ENCODE measurements at regions of chr6 and their contacts with region 1.

Region 1: DNA sequence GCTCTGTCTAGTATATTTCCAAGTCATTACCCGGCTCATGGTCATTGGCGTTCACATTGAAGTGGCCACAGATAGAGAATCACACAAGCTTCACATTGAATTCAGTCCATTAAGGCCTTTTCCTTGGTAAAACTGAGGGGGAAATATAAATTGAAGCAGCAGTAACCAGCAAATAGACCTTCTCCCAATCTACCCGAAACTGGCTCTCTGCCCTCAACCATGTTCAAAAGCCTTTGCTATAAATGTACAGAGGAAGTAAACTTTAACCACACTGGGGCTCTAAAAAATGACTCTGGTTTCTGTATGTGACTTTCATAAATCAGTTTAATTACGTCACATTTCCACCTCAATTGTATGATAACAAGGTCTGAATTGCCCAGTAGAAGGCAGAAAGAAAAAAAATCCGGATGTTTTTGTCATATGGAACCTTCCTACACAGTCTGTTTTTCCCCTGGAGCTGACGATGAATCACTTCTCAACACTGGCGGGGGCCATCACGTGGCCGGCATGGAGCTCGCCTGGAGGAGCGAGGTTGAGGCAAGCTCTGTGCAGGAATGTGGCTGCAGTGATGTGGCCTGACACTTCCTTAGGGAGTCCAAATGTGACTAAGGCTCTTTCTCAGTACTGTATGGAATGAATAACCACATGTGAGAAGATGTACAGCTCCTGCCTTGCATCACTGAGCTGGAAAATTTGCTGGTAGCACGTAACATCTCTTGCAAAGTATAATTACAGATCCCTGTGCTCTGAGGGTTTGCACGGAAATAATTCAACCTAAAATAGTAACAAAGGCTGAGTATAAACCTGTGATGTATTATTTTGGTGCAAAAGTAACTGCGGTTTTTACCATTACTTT is 58.6 kb upstream of the SNX9 start:
- DNase-seq: peak; percentile 95
- H3K4me3 Mint-ChIP-seq: peak overlapping the region; percentile 57
- H3K27ac Mint-ChIP-seq: peak overlapping the region; percentile 96
- H3K4me1 Mint-ChIP-seq: peaks cover 70% of the 10 kb centered on the region
- H3K27me3 Mint-ChIP-seq: peaks cover 6% of the 10 kb centered on the region

Region 2: GRCh38 chr6:157535339-157536222 is 228.8 kb before region 1 on chr6:
- intact Hi-C with region 1: loop called (anchors 5 kb)
- DNase-seq: peak; percentile 76
- H3K4me3 Mint-ChIP-seq: peak overlapping the region; percentile 67
- H3K27ac Mint-ChIP-seq: peak overlapping the region; percentile 80
- H3K4me1 Mint-ChIP-seq: peaks cover 49% of the 10 kb centered on the region
- H3K27me3 Mint-ChIP-seq: peaks cover 8% of the 10 kb centered on the region

Region 3: GRCh38 chr6:157679605-157680580 is 84.5 kb before region 1 on chr6:
- intact Hi-C with region 1: no loop called
- DNase-seq: no peak
- H3K4me3 Mint-ChIP-seq: no peak overlapping the region
- H3K27ac Mint-ChIP-seq: no peak overlapping the region
- H3K4me1 Mint-ChIP-seq: no peaks in the 10 kb centered on the region
- H3K27me3 Mint-ChIP-seq: no peaks in the 10 kb centered on the region

Region 4: DNA sequence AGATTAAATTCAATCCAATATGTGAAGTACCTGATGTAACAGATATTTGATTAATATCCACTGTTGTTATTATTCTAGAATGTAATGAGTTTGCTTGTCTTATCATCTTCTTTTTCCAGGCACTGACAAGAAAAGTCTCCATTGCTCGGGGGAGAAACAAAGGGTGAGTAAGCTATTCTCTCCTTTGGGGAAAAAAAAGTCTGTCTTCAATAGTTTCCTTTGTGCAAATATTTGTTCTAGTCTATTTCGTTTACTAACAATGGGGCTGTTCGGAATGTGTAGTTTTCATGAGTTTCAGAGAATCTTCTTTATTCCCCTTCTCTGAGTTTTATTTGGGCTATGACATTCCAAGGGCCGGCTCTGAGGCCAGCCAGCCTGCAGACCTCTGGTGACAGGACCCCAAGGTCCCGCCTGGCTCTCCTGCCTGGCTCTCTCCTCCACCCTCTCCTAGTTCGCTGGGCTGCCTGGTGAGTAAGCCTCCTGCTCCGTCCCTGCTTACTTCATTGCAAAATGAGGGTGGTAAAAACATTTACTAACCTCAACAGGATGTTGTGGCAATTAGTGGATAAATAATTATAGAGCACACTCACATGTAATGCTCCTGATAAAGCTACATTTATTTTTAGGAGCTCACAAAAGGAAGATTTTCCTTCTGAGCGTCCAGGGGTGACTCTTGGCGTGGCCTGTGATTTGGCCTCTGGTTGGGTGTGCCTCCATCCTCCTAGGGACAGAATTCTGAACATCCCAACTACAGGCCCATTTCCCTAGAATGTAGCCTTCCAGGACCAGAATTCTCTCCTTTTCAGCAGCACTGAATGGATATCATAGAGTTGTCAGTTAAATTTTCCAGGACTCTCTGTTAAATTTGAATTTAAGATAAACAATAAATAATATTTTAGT is 15.5 kb after region 1 on chr6:
- intact Hi-C with region 1: no loop called
- DNase-seq: no peak
- H3K4me3 Mint-ChIP-seq: no peak overlapping the region
- H3K27ac Mint-ChIP-seq: no peak overlapping the region
- H3K4me1 Mint-ChIP-seq: no peaks in the 10 kb centered on the region
- H3K27me3 Mint-ChIP-seq: peaks cover 51% of the 10 kb centered on the region

Region 5: GRCh38 chr6:157830354-157831017 is 66.1 kb after region 1 on chr6:
- intact Hi-C with region 1: loop called (anchors 2 kb)
- DNase-seq: peak; percentile 53
- H3K4me3 Mint-ChIP-seq: no peak overlapping the region
- H3K27ac Mint-ChIP-seq: peak overlapping the region; percentile 15
- H3K4me1 Mint-ChIP-seq: peaks cover 44% of the 10 kb centered on the region
- H3K27me3 Mint-ChIP-seq: peaks cover 2% of the 10 kb centered on the region

Region 6: GRCh38 chr6:157841211-157841840 is 76.9 kb after region 1 on chr6:
- intact Hi-C with region 1: no loop called
- DNase-seq: no peak
- H3K4me3 Mint-ChIP-seq: no peak overlapping the region
- H3K27ac Mint-ChIP-seq: no peak overlapping the region
- H3K4me1 Mint-ChIP-seq: peaks cover 27% of the 10 kb centered on the region
- H3K27me3 Mint-ChIP-seq: no peaks in the 10 kb centered on the region

Region 7: DNA sequence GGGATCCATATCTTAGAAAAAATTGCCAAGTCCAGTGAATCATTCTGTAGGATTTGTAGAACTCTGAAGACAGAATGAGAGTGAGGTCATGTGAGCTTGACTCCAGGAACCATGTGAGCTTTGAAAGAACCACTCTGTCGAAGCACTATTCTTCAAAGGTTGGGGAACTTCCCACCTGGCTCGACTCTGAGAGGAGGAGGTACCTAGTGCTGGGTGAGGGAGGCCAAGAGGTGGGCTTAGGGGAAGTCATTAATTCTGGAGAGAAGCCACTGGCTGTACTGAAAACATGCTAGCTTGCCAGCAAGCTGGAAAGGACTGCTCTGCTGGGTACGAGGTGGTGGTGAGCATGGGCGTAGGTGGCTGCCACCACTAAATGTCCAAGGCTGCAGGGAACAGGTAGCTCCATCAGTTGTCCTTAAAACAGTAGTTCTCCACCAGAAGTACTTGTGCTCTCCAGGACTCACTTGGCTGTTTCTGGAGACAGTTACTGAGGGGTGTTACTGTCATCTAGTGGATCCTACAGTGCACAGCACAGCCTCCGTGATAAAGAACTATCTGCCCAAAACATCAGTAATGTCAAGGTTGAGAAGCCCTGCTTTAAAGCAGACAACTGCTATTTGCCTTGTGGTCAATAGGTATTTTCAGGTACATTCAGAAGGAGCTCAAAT is 182.6 kb after region 1 on chr6:
- intact Hi-C with region 1: loop called (anchors 2 kb)
- DNase-seq: peak; percentile 68
- H3K4me3 Mint-ChIP-seq: no peak overlapping the region
- H3K27ac Mint-ChIP-seq: no peak overlapping the region
- H3K4me1 Mint-ChIP-seq: peaks cover 21% of the 10 kb centered on the region
- H3K27me3 Mint-ChIP-seq: peaks cover 11% of the 10 kb centered on the region

Region 8: DNA sequence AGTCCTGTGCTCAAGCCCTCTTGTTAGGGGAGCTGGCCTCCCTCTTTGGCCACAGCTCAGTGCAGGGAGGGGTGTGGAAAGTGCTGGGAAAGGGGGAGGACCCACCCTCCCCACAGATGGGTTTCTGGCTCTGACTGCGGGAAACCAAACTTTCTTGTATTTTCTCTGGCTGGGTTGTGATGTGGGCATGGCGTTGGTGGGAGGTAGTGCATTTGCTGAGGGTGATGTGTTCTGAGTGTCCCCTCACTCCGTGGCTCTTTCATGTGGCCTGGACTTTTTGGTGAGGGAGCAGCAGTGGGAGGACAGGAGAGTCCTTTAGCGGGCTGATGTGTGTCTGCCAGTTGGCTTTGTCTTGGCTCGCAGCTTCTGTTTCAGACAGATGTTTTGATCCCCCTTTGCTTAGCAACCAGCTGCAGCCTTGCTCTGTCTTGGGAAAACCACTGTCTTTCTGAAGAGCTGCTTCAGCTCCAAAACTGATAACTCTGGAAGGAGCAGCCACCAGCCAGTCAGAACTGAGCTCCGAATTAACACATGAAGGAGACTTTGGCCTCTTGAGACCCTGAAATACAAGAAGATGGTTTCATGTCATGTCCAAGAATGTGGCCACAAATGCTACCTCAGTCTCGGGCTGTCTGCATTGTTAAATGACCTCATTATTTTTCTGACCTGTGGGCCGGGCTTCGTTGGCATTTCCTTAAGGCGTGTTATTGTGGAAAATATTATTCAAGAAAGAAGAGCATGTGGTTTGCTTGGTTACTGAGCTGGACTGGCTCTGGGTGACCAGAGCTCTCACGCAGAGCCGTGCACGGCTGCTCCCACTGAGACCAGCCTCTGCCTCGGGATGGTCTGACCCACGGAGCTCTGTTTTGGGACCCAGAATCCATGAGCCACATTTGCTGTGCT is 238.8 kb after region 1 on chr6:
- intact Hi-C with region 1: loop called (anchors 1 kb)
- DNase-seq: peak; percentile 68
- H3K4me3 Mint-ChIP-seq: peak overlapping the region; percentile 17
- H3K27ac Mint-ChIP-seq: peak overlapping the region; percentile 74
- H3K4me1 Mint-ChIP-seq: peaks cover 40% of the 10 kb centered on the region
- H3K27me3 Mint-ChIP-seq: no peaks in the 10 kb centered on the region

Region 9: DNA sequence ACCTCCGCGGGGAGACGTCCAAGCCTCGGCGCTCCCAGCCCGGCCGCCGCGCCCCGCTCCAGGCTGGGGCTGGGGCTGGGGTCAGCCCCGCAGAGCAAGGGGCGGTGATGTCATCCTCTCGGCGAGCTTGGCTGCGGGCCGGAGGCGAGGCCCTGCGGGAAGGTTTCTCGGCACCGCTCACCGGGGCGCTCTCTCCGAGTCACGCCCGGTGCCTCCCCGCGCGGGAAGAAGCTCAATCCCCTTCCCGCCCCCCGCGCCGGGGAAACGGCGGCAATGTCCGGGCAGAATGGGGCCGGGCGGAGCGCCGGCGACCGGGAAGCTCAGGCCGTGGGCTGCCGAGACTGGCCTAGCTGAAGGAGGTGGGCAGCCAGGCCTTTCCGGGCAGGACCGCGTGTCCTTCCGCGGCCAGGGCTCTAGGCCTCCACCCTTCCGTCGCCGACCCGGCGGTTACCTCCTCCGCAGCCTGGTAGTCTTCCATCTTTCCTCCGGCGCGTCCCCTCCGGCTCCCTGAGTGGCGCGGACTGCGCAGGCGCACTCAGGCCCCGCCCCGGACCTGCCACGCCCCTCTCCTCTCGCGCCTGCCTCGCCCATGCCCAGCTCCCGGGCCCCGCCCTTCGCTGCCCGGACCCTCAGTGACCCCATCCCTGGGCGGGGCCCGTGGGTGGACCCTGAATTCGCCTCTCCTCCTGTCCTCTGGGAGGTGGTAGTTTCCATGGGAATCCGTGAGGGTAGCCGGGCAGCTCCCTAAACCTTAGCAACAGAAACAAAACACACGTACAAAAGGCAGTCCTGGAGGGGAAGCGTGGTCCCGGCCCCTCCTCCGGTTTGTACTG is 880.0 kb after region 1 on chr6 and contains the start of gene DYNLT1:
- intact Hi-C with region 1: loop called (anchors 5 kb)
- DNase-seq: peak; percentile 98
- H3K4me3 Mint-ChIP-seq: peak within 1 kb of the TSS; percentile 97
- H3K27ac Mint-ChIP-seq: peak within 1 kb of the TSS; percentile 97
- H3K4me1 Mint-ChIP-seq: peaks cover 72% of the 10 kb centered on the region
- H3K27me3 Mint-ChIP-seq: no peaks in the 10 kb centered on the region
- total RNA-seq, gene DYNLT1: 103 and 110 TPM in 2 replicates